ENCODE measurements at regions of chr16 and their contacts with region 1.

Region 1: GRCh38 chr16:54489225-54490111 is 202.9 kb upstream of the IRX3 start:
- DNase-seq: peak in 1 of 3 donors; percentile 64
- ATAC-seq: peak in 1 of 2 donors; percentile 25
- H3K4me3 ChIP-seq: no peak overlapping the region
- H3K27ac ChIP-seq: peak overlapping the region; percentile 38
- H3K4me1 ChIP-seq: peaks cover 2% of the 10 kb centered on the region
- H3K27me3 ChIP-seq: no peaks in the 10 kb centered on the region

Region 2: GRCh38 chr16:54411544-54411943 is 77.9 kb before region 1 on chr16:
- intact Hi-C with region 1: loop called in 1 of 4 experiments (anchors 10 kb)
- DNase-seq: peak; percentile 55 to 82 (median 74)
- ATAC-seq: peak; percentile 79 to 87
- H3K4me3 ChIP-seq: no peak overlapping the region
- H3K27ac ChIP-seq: no peak overlapping the region
- H3K4me1 ChIP-seq: peaks cover 5% of the 10 kb centered on the region
- H3K27me3 ChIP-seq: no peaks in the 10 kb centered on the region

Measured in right cardiac atrium (tissue), 5 donors.